Activated CD4-positive, alpha-beta T cell treated with anti-CD3 and anti-CD28 coated beads for 36 hours (primary cell): ENCODE measurements at regions of chr12 and their contacts with region 1.

Region 1: GRCh38 chr12:28065889-28066630 is 93.5 kb upstream of the PTHLH start:
- DNase-seq: peak; percentile 15
- ATAC-seq: peak; percentile 68
- H3K4me3 Mint-ChIP-seq: no peak overlapping the region
- H3K27ac Mint-ChIP-seq: no peak overlapping the region
- H3K4me1 Mint-ChIP-seq: peaks cover 22% of the 10 kb centered on the region
- H3K27me3 Mint-ChIP-seq: peaks cover 13% of the 10 kb centered on the region

Region 2: GRCh38 chr12:27975244-27976136 is 90.6 kb before region 1 on chr12:
- CTCF ChIA-PET with region 1: no interaction called
- POLR2A ChIA-PET with region 1: no interaction called
- intact Hi-C with region 1: no loop called
- DNase-seq: peak; percentile 52
- ATAC-seq: peak; percentile 74
- H3K4me3 Mint-ChIP-seq: peak overlapping the region; percentile 52
- H3K27ac Mint-ChIP-seq: no peak overlapping the region
- H3K4me1 Mint-ChIP-seq: peaks cover 15% of the 10 kb centered on the region
- H3K27me3 Mint-ChIP-seq: peaks cover 80% of the 10 kb centered on the region

Region 3: DNA sequence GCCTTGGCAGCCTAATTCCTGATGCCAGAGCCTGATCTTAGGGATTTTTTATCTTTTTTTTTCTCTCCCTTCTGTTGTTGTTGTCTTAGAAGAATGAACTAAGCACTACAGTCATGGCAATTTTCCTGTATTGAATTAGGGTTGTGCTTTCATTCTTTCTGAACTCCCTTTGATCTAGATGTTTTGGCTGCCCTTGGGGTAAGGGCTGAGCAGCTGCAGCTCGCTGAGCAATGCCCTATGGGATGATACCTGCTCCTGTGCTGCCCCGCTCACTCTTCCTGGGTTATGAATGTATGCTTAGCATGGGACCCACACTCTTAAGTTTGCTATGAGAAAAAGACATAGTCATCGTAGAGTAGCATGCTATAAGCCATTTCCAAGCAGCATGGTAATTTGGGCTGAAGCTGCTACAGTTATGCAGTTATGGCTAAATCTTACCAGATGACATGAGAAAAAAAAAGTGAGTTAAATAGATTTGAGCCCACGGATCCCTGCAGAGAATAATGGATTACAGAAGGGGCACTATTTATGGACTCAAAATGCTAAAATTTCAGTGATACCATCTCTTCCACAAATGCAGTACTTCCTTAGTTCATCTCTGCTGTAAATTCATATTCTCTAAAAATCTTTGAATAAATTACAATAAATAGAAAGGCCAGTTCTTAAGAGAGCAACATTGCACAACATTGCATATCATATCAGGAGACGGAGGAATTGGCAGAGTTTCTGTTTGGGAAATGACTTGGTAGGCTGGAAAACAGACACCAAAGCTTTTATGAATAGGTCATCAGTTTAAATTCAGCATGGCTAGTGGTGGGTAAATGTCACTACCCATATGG is 14.3 kb before region 1 on chr12:
- CTCF ChIA-PET with region 1: no interaction called
- POLR2A ChIA-PET with region 1: no interaction called
- intact Hi-C with region 1: no loop called
- DNase-seq: no peak
- ATAC-seq: no peak
- H3K4me3 Mint-ChIP-seq: no peak overlapping the region
- H3K27ac Mint-ChIP-seq: no peak overlapping the region
- H3K4me1 Mint-ChIP-seq: no peaks in the 10 kb centered on the region
- H3K27me3 Mint-ChIP-seq: peaks cover 9% of the 10 kb centered on the region

Region 4: DNA sequence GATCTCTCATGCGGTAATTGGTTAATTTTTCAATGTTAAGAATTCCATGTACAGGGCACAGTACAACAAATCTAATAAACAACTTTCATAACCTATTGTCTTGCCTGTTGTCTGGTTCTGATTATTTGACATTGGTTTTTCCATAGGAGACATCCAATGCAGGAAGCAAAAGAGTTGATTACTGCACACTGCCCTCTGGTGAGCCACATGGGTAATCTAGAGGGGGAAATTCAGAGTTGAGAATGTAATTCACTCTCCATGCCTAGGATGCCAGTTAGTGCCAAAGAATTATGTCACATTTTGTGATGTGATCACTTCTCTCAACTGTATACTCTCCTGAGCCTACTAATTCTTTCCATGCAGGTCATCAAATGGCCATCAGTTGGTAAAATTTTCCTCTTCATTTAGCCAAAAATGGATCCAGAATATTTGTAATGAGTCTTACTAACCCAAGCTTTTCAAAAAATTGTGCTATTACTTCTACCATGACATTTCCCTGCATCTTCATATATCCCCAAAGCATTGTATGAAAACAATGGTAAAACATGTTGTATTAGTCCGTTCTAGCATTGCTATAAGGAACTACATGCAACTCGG is 106.5 kb after region 1 on chr12:
- CTCF ChIA-PET with region 1: no interaction called
- POLR2A ChIA-PET with region 1: no interaction called
- intact Hi-C with region 1: loop called in 1 of 2 experiments (anchors 5 kb)
- DNase-seq: no peak
- ATAC-seq: no peak
- H3K4me3 Mint-ChIP-seq: no peak overlapping the region
- H3K27ac Mint-ChIP-seq: no peak overlapping the region
- H3K4me1 Mint-ChIP-seq: peaks cover 10% of the 10 kb centered on the region
- H3K27me3 Mint-ChIP-seq: no peaks in the 10 kb centered on the region

Region 5: DNA sequence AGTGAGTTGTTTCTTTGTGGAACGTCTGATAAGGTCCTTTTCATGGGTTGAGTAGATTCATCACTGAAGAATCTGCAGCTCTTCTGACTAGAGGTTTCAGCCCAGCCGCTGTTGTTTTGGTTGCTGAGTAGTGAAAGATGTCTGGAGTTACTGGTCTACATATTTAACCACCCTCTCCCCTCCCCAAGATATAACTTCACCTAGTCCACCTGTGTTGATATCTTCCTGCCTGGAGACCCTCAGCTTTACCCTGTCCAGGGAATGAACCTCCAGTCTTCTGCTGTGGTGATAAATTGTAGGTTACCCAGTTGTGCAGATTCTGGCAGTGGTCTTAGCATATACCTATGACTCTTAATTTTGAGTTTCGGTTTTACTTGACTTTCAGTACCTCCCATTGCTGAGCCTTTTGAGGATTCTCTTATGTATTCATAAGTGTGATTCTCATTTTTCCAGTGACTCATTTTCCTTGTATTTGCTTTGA is 187.1 kb after region 1 on chr12:
- CTCF ChIA-PET with region 1: no interaction called
- POLR2A ChIA-PET with region 1: no interaction called
- intact Hi-C with region 1: loop called in 1 of 2 experiments (anchors 2 kb)
- DNase-seq: peak; percentile 72
- ATAC-seq: peak; percentile 95
- H3K4me3 Mint-ChIP-seq: peak overlapping the region; percentile 34
- H3K27ac Mint-ChIP-seq: peak overlapping the region; percentile 87
- H3K4me1 Mint-ChIP-seq: peaks cover 69% of the 10 kb centered on the region
- H3K27me3 Mint-ChIP-seq: no peaks in the 10 kb centered on the region